ENCODE measurements at regions of chr11 and their contacts with region 1.

Region 1: GRCh38 chr11:6377902-6378639 is 12.2 kb upstream of the SMPD1 start:
- DNase-seq: no peak
- H3K4me3 ChIP-seq: no peak overlapping the region
- H3K27ac ChIP-seq: no peak overlapping the region
- H3K4me1 ChIP-seq: no peaks in the 10 kb centered on the region
- H3K27me3 ChIP-seq: no peaks in the 10 kb centered on the region
- CTCF ChIP-seq: no peak
- EP300 ChIP-seq: no peak
- POLR2A ChIP-seq: no peak

Region 2: GRCh38 chr11:6443269-6444003 is 65.4 kb after region 1 on chr11:
- intact Hi-C with region 1: loop called (anchors 1 kb)
- DNase-seq: peak; percentile 79
- H3K4me3 ChIP-seq: no peak overlapping the region
- H3K27ac ChIP-seq: no peak overlapping the region
- H3K4me1 ChIP-seq: no peaks in the 10 kb centered on the region
- H3K27me3 ChIP-seq: no peaks in the 10 kb centered on the region
- CTCF ChIP-seq: peak; percentile 58 to 89 (median 76)
- EP300 ChIP-seq: no peak
- POLR2A ChIP-seq: no peak

Region 3: DNA sequence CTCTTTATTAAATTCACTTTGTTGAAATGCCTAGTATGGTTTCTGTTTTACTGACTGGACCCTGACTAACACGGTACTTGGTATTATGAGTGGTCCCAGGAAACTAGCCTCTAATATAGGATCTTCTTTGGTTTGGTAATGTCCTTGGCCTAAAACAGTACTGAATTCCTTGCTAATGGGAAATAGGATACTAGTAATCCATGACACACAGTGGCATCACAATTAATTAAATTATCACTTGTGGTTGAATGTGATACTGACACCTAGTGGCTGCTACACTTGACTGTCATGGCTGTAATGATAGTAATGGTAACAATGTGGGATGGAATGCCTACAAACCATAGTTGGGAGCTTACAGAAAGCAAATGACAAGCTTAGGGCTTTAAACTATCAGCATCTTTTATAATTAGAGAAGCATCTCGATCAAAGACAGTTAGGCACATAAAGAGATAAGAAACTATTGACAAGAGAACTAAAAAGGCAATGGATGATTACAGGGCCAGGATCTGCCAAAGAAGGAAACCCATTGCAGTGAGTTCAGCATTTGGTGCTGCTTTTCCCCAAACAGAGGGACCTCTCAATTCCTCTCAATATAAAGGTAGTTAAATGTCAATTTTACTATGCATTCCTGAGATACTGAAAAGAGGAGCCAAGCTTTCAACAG is 127.6 kb after region 1 on chr11:
- intact Hi-C with region 1: loop called (anchors 1 kb)
- DNase-seq: no peak
- H3K4me3 ChIP-seq: no peak overlapping the region
- H3K27ac ChIP-seq: peak overlapping the region; percentile 23 to 55 (median 46)
- H3K4me1 ChIP-seq: peaks cover 0 to 11% (median 3%) of the 10 kb centered on the region in 4 donors
- H3K27me3 ChIP-seq: no peaks in the 10 kb centered on the region
- CTCF ChIP-seq: peak; percentile 32 to 78 (median 65)
- EP300 ChIP-seq: no peak
- POLR2A ChIP-seq: no peak

Measured in sigmoid colon (tissue), 7 donors.